ENCODE measurements at regions of chr19 and their contacts with region 1.

Region 1: GRCh38 chr19:12847159-12848139 is 9.1 kb downstream of the MAST1 start:
- DNase-seq: peak; percentile 46 to 99 (median 72)
- ATAC-seq: peak; percentile 99
- H3K4me3 ChIP-seq: no peak overlapping the region
- H3K4me3 Mint-ChIP-seq: peak overlapping the region in 9 of 10 donors; percentile 41 to 70 (median 50)
- H3K27ac ChIP-seq: no peak overlapping the region
- H3K27ac Mint-ChIP-seq: peak overlapping the region in 1 of 9 donors; percentile 28
- H3K4me1 ChIP-seq: peaks cover 7 to 9% of the 10 kb centered on the region in 2 donors
- H3K4me1 Mint-ChIP-seq: peaks cover 0 to 4% (median 0%) of the 10 kb centered on the region in 7 donors
- H3K27me3 ChIP-seq: peaks cover 0 to 13% of the 10 kb centered on the region in 2 donors
- H3K27me3 Mint-ChIP-seq: peaks cover 9 to 39% (median 28%) of the 10 kb centered on the region in 5 donors

Region 2: DNA sequence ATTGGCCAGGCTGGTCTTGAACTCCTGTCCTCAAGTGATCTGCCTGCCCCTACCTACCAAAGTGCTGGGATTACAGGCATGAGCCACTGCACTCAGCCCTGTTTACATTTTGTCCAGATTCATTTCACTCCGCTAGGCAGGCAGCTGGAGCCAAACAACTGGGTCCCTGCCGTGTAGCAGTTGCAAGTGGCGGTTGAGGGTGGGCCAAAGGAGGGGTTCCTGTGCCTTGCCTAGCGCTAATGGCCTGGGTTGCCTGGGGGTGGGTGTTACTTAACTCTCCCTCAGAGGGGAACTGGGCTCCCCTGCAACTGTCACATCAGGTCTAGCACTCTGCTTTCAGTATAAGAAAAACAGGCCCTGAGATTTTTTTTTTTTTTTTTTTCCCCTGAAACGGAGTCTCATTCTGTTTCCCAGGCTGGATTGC is 1277.4 kb before region 1 on chr19:
- CTCF ChIA-PET with region 1: no interaction called
- POLR2A ChIA-PET with region 1: no interaction called
- intact Hi-C with region 1: no loop called
- DNase-seq: no peak
- ATAC-seq: no peak
- H3K4me3 ChIP-seq: no peak overlapping the region
- H3K4me3 Mint-ChIP-seq: no peak overlapping the region
- H3K27ac ChIP-seq: no peak overlapping the region
- H3K27ac Mint-ChIP-seq: no peak overlapping the region
- H3K4me1 ChIP-seq: no peaks in the 10 kb centered on the region
- H3K4me1 Mint-ChIP-seq: peaks cover 0 to 6% (median 0%) of the 10 kb centered on the region in 7 donors
- H3K27me3 ChIP-seq: no peaks in the 10 kb centered on the region
- H3K27me3 Mint-ChIP-seq: no peaks in the 10 kb centered on the region

Region 3: GRCh38 chr19:12145348-12145747 is 702.1 kb before region 1 on chr19:
- CTCF ChIA-PET with region 1: no interaction called
- POLR2A ChIA-PET with region 1: no interaction called
- intact Hi-C with region 1: no loop called
- DNase-seq: no peak
- ATAC-seq: no peak
- H3K4me3 ChIP-seq: no peak overlapping the region
- H3K4me3 Mint-ChIP-seq: no peak overlapping the region
- H3K27ac ChIP-seq: no peak overlapping the region
- H3K27ac Mint-ChIP-seq: no peak overlapping the region
- H3K4me1 ChIP-seq: peaks cover 11% of the 10 kb centered on the region in 2 donors
- H3K4me1 Mint-ChIP-seq: peaks cover 9 to 17% (median 11%) of the 10 kb centered on the region in 7 donors
- H3K27me3 ChIP-seq: no peaks in the 10 kb centered on the region
- H3K27me3 Mint-ChIP-seq: no peaks in the 10 kb centered on the region

Region 4: DNA sequence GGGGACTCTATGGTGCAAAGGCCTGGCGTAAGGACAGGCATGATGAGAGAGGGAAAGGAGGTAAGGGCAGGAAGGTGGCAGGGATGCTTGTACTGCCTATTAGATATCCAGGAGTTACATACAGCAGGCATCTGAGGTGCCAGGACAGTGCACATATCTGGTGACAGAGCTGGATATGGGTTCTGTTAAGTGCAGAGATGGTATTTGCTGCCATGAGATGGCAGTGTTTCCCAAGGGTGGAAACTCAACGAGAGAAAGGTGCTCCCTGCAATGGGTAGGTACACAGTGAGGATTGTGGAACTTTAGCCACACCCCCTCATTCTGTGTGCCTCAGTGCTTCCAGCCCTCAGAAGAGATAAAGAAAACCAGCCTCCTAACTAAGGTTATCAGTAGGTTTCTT is 130.6 kb before region 1 on chr19:
- CTCF ChIA-PET with region 1: interaction called, 5 read pairs
- POLR2A ChIA-PET with region 1: no interaction called
- intact Hi-C with region 1: loop called in 1 of 2 experiments (anchors 1 kb)
- DNase-seq: peak in 7 of 9 donors; percentile 35 to 66 (median 55)
- ATAC-seq: peak; percentile 86
- H3K4me3 ChIP-seq: no peak overlapping the region
- H3K4me3 Mint-ChIP-seq: peak overlapping the region in 1 of 10 donors; percentile 51
- H3K27ac ChIP-seq: no peak overlapping the region
- H3K27ac Mint-ChIP-seq: peak overlapping the region in 6 of 9 donors; percentile 10 to 85 (median 68)
- H3K4me1 ChIP-seq: peaks cover 6 to 8% of the 10 kb centered on the region in 2 donors
- H3K4me1 Mint-ChIP-seq: peaks cover 13 to 29% (median 19%) of the 10 kb centered on the region in 7 donors
- H3K27me3 ChIP-seq: no peaks in the 10 kb centered on the region
- H3K27me3 Mint-ChIP-seq: no peaks in the 10 kb centered on the region

Region 5: GRCh38 chr19:12766051-12766521 is 81.4 kb before region 1 on chr19:
- CTCF ChIA-PET with region 1: interaction called, 121 read pairs
- POLR2A ChIA-PET with region 1: interaction called, 4 read pairs
- intact Hi-C with region 1: loop called (anchors 1 kb)
- DNase-seq: peak in 8 of 9 donors; percentile 64 to 89 (median 72)
- ATAC-seq: peak; percentile 92
- H3K4me3 ChIP-seq: no peak overlapping the region
- H3K4me3 Mint-ChIP-seq: peak overlapping the region in 3 of 10 donors; percentile 7 to 60 (median 44)
- H3K27ac ChIP-seq: no peak overlapping the region
- H3K27ac Mint-ChIP-seq: no peak overlapping the region
- H3K4me1 ChIP-seq: no peaks in the 10 kb centered on the region
- H3K4me1 Mint-ChIP-seq: peaks cover 0 to 9% (median 0%) of the 10 kb centered on the region in 7 donors
- H3K27me3 ChIP-seq: no peaks in the 10 kb centered on the region
- H3K27me3 Mint-ChIP-seq: no peaks in the 10 kb centered on the region

Region 6: GRCh38 chr19:12872941-12873890 is 25.8 kb after region 1 on chr19:
- CTCF ChIA-PET with region 1: no interaction called
- POLR2A ChIA-PET with region 1: no interaction called
- intact Hi-C with region 1: no loop called
- DNase-seq: peak in 8 of 9 donors; percentile 28 to 79 (median 52)
- ATAC-seq: peak; percentile 81
- H3K4me3 ChIP-seq: no peak overlapping the region
- H3K4me3 Mint-ChIP-seq: peak overlapping the region in 6 of 10 donors; percentile 35 to 70 (median 56)
- H3K27ac ChIP-seq: no peak overlapping the region
- H3K27ac Mint-ChIP-seq: peak overlapping the region in 4 of 9 donors; percentile 28 to 71 (median 62)
- H3K4me1 ChIP-seq: no peaks in the 10 kb centered on the region
- H3K4me1 Mint-ChIP-seq: peaks cover 0 to 9% (median 5%) of the 10 kb centered on the region in 7 donors
- H3K27me3 ChIP-seq: no peaks in the 10 kb centered on the region
- H3K27me3 Mint-ChIP-seq: peaks cover 0 to 3% (median 0%) of the 10 kb centered on the region in 5 donors